IMR-90 (cell line): ENCODE measurements at regions of chr20 and their contacts with region 1.

Region 1: DNA sequence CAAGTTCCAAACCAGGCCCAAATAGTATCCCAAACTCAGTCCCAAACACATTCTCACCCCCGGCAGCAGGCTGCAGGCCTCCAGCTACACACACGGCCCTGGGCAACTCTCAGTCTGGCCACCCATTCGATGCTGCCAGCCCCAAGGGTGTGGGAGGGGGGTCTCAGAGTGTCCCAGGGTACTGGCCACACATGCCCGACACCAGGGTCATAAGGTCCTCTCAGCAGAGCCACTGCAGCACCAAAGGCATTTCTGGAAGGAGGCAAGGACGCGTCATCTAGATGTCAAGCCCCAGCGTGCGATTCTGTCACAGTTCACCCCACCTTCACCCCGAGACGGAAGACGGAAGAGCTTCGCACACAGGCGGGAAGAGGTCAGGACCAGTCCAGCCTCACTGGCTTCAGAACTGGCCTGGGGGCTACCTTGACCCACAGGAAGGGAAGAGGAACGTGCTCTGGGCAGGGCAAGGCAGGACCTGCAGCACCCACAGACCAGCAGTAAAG is 9.5 kb downstream of the MYL9 start:
- DNase-seq: peak; percentile 17
- ATAC-seq: peak; percentile 42
- H3K4me3 ChIP-seq: no peak overlapping the region
- H3K27ac ChIP-seq: no peak overlapping the region
- H3K4me1 ChIP-seq: no peaks in the 10 kb centered on the region
- H3K27me3 ChIP-seq: no peaks in the 10 kb centered on the region
- CTCF ChIP-seq: no peak
- POLR2A ChIP-seq: no peak
- RAD21 ChIP-seq: no peak

Region 2: DNA sequence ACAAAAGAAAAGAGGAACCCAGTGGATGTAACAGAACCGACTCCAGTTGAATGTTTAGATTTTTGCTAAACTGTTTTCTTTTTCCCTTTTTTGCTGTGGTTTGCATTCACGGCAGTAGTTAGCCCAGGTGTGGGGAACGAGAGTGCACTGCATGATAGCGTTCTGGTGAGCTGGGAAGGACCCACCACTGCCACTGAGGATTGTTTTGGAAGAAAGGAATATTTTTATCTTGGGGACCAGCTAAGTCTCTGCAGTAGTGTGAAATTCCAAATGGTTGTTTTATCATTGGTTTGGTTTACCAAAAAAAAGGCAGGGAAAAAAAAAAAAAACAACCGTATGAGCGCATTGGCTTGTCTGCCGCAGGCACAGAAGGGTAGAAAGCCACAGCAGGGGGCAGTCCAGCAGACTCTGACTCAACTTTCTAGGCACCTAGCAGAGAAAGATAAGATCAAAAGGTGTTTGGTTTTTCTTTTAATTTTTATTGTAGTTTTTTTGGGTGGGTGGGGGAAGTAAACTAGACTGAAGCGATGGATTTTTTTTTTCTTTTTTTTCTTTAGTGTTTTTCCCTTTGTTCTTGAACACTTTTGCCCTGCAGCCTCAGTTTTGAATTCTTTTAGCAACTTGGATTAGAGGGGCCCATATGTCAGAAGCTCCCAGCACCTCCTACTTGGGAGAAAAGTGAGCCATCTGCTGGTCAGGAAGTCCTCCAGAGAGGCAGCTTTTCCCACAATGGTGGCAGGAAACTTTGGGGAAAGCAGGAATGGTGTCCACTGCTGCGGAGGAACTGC is 41.2 kb after region 1 on chr20:
- CTCF ChIA-PET with region 1: no interaction called
- POLR2A ChIA-PET with region 1: no interaction called
- dilution Hi-C with region 1: no loop called
- in situ Hi-C with region 1: no loop called
- intact Hi-C with region 1: loop called (anchors 1 kb)
- DNase-seq: peak; percentile 51
- ATAC-seq: peak; percentile 84
- H3K4me3 ChIP-seq: no peak overlapping the region
- H3K27ac ChIP-seq: no peak overlapping the region
- H3K4me1 ChIP-seq: no peaks in the 10 kb centered on the region
- H3K27me3 ChIP-seq: no peaks in the 10 kb centered on the region
- CTCF ChIP-seq: peak; percentile 49
- POLR2A ChIP-seq: no peak
- RAD21 ChIP-seq: peak; percentile 40

Region 3: DNA sequence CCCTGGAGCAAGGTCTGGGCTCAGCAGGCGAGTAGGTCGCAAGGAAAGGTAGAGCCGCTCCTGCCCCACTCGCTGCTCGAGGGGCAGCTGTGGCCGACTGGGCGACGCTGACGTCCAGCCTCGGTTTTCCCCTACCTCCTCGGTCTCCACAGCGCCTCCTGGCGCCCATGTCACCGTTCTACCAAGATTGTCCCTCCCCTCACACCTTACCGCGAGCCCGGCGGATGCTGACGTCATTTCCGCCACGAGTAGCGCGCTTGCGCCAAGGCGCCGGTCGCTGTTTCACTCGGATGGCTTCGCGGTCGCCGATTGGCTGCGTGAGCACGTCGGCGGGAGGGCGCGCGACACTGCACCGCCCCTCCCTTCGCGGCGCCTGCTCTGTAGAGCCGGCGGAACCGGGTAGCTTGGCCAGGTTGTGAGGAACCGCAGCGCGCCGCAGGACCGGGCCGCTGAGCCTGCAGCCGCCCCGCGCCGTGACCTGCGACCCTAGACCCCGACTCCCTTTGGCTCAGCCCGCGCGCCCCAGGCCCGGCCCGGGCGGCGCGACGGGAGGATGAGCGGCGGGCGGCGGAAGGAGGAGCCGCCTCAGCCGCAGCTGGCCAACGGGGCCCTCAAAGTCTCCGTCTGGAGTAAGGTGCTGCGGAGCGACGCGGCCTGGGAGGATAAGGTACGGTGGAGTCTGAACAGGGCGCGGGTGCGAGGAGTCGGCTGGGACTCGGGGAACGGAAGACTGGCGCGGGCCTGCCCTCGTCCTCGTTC is 54.7 kb after region 1 on chr20 and contains the start of gene RAB5IF:
- CTCF ChIA-PET with region 1: no interaction called
- POLR2A ChIA-PET with region 1: no interaction called
- dilution Hi-C with region 1: no loop called
- in situ Hi-C with region 1: no loop called
- intact Hi-C with region 1: loop called (anchors 1 kb)
- DNase-seq: peak; percentile 98
- ATAC-seq: peak; percentile 99
- H3K4me3 ChIP-seq: peak within 1 kb of the TSS; percentile 84
- H3K27ac ChIP-seq: peak within 1 kb of the TSS; percentile 68
- H3K4me1 ChIP-seq: peaks cover 4% of the 10 kb centered on the region; the same call in 1 of the 2 replicates
- H3K27me3 ChIP-seq: no peaks in the 10 kb centered on the region
- CTCF ChIP-seq: peak; percentile 98
- POLR2A ChIP-seq: peak; percentile 80
- RAD21 ChIP-seq: peak; percentile 74
- total RNA-seq, gene RAB5IF: 74.0 and 90.3 TPM in 2 replicates

Region 4: DNA sequence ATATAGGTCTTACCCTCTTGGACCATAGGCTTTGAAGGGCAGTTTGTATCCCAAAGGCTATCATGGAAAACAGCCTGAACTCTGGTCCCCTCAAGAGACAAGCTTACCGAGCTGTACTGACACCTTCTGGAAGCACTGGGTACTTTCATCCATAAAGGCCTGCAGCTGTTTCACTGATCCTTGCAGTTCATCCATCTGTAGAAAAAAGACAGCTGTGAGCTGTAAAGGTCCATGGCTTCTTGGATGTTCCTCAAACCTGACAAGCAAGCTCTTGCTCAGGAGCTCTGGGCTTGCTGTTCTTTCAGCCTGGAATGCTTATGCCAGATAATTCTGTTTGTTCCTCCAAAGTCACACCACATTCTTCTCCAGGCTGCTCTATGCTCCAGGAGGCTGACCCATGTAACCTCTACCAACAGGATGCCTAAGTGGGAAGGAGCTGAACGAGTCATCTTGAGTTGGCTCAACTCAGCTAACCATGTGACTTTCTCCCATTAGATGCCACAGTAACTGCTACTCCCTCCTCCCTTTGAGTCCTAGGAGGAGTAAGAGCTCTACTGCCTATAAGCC is 203.9 kb after region 1 on chr20:
- CTCF ChIA-PET with region 1: no interaction called
- POLR2A ChIA-PET with region 1: interaction called, 3 read pairs
- dilution Hi-C with region 1: no loop called
- in situ Hi-C with region 1: no loop called
- intact Hi-C with region 1: loop called (anchors 1 kb)
- DNase-seq: peak; percentile 88
- ATAC-seq: peak; percentile 98
- H3K4me3 ChIP-seq: no peak overlapping the region
- H3K27ac ChIP-seq: peak overlapping the region; percentile 4; the same call in 1 of the 2 replicates
- H3K4me1 ChIP-seq: no peaks in the 10 kb centered on the region
- H3K27me3 ChIP-seq: no peaks in the 10 kb centered on the region
- CTCF ChIP-seq: peak; percentile 81
- POLR2A ChIP-seq: no peak
- RAD21 ChIP-seq: peak; percentile 76

Region 5: GRCh38 chr20:36886859-36887751 is 336.3 kb after region 1 on chr20:
- CTCF ChIA-PET with region 1: no interaction called
- POLR2A ChIA-PET with region 1: no interaction called
- dilution Hi-C with region 1: no loop called
- in situ Hi-C with region 1: no loop called
- intact Hi-C with region 1: loop called (anchors 1 kb)
- DNase-seq: peak; percentile 74
- ATAC-seq: peak; percentile 99
- H3K4me3 ChIP-seq: no peak overlapping the region
- H3K27ac ChIP-seq: no peak overlapping the region
- H3K4me1 ChIP-seq: no peaks in the 10 kb centered on the region; the same call in 1 of the 2 replicates
- H3K27me3 ChIP-seq: peaks cover 2% of the 10 kb centered on the region; the same call in 1 of the 2 replicates
- CTCF ChIP-seq: peak; percentile 96
- POLR2A ChIP-seq: peak; percentile 44; the same call in 1 of the 2 replicates
- RAD21 ChIP-seq: peak; percentile 98